A673 (cell line): ENCODE measurements at regions of chr5 and their contacts with region 1.

Region 1: DNA sequence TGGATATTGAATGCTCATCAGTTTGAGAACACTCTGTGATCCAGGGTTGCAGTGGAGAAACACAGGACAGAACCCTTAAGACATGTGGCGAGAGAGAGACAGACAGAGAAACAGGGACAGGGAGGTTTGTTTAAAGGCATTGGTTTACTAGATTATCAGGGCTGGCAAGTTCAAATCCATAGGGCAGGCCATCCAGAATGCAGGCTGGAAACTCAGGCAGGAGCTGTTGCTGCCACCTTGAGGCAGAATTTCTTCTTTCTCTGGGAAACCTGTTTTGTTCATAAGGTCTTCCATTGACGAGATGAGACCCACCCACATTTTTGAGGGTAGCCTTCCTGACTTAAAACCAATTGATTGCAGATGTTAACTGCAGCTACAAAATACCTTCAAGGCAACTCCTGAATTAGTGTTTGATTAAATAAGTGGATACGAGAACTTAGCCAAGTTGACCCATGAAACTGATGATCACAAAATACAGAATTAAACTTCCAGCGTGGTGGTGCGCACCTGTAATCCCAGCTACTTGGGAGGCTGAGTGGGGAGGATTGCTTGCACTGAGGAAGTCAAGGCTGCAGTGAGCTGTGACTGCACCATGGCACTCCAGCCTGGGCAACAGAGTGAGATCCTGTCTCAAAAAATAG is 55.9 kb downstream of the NSUN2 start:
- DNase-seq: peak; percentile 77
- H3K4me3 ChIP-seq: no peak overlapping the region
- H3K27ac ChIP-seq: no peak overlapping the region
- H3K4me1 ChIP-seq: no peaks in the 10 kb centered on the region
- H3K27me3 ChIP-seq: peaks cover 67% of the 10 kb centered on the region
- CTCF ChIP-seq: peak; percentile 72

Region 2: GRCh38 chr5:5492087-5492933 is 1084.7 kb before region 1 on chr5:
- CTCF ChIA-PET with region 1: no interaction called
- POLR2A ChIA-PET with region 1: no interaction called
- intact Hi-C with region 1: loop called (anchors 2 kb)
- DNase-seq: peak; percentile 80
- H3K4me3 ChIP-seq: no peak overlapping the region
- H3K27ac ChIP-seq: no peak overlapping the region
- H3K4me1 ChIP-seq: peaks cover 3% of the 10 kb centered on the region
- H3K27me3 ChIP-seq: peaks cover 6% of the 10 kb centered on the region
- CTCF ChIP-seq: peak; percentile 82

Region 3: GRCh38 chr5:5886812-5887486 is 690.0 kb before region 1 on chr5:
- CTCF ChIA-PET with region 1: no interaction called
- POLR2A ChIA-PET with region 1: no interaction called
- intact Hi-C with region 1: loop called (anchors 5 kb)
- DNase-seq: no peak
- H3K4me3 ChIP-seq: no peak overlapping the region
- H3K27ac ChIP-seq: no peak overlapping the region
- H3K4me1 ChIP-seq: no peaks in the 10 kb centered on the region
- H3K27me3 ChIP-seq: peaks cover 9% of the 10 kb centered on the region
- CTCF ChIP-seq: peak; percentile 59

Region 4: GRCh38 chr5:6377905-6378765 is 198.8 kb before region 1 on chr5 and contains the start of gene MED10:
- CTCF ChIA-PET with region 1: no interaction called
- POLR2A ChIA-PET with region 1: no interaction called
- intact Hi-C with region 1: loop called (anchors 10 kb)
- DNase-seq: peak; percentile 96
- H3K4me3 ChIP-seq: peak within 1 kb of the TSS; percentile 97
- H3K27ac ChIP-seq: peak within 1 kb of the TSS; percentile 87
- H3K4me1 ChIP-seq: peaks cover 10% of the 10 kb centered on the region
- H3K27me3 ChIP-seq: no peaks in the 10 kb centered on the region
- CTCF ChIP-seq: no peak
- total RNA-seq, gene MED10: 48.7 and 59.9 TPM in 2 replicates